PC-3 (cell line): ENCODE measurements at regions of chr5 and their contacts with region 1.

Region 1: DNA sequence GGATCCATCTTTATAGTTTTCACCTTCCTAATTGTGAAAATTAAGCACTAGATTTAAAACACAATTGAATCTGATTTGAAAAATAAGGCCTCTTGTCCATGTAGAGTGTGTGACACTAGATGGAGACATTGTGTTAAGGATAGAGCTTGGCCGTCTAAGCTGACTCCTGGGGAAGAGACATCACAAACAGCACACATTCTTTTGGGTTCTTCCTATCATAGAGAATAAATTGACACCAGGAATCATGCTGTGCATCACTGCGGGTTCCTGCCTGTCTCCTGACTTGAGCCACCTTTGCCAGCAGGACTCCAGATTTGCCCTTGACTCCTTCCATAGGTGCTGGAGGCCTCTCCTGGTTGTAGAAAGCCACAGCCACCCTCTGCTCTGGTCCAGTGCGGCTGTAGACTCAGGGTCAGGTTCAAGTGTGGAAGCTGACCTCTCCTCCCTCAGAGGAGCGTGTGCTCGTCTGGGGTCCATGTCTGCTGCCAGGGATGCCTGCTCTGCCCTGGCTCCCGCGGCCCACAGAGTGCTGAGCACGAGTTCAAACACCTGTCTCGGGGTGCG is 11.2 kb downstream of the ROPN1L start:
- DNase-seq: peak; percentile 98
- ATAC-seq: peak; percentile 47
- H3K4me3 ChIP-seq: peak overlapping the region; percentile 3; the same call in 1 of the 2 replicates
- H3K27ac ChIP-seq: peak overlapping the region; percentile 35
- H3K4me1 ChIP-seq: peaks cover 49% of the 10 kb centered on the region
- H3K27me3 ChIP-seq: no peaks in the 10 kb centered on the region
- CTCF ChIP-seq: peak; percentile 99

Region 2: GRCh38 chr5:10377081-10377480 is 75.8 kb before region 1 on chr5:
- CTCF ChIA-PET with region 1: no interaction called
- POLR2A ChIA-PET with region 1: no interaction called
- intact Hi-C with region 1: no loop called
- DNase-seq: no peak
- ATAC-seq: no peak
- H3K4me3 ChIP-seq: no peak overlapping the region
- H3K27ac ChIP-seq: no peak overlapping the region
- H3K4me1 ChIP-seq: no peaks in the 10 kb centered on the region
- H3K27me3 ChIP-seq: no peaks in the 10 kb centered on the region
- CTCF ChIP-seq: no peak

Region 3: GRCh38 chr5:10467240-10468198 is 14.7 kb after region 1 on chr5:
- CTCF ChIA-PET with region 1: interaction called, 4 read pairs
- POLR2A ChIA-PET with region 1: interaction called, 10 read pairs
- intact Hi-C with region 1: no loop called
- DNase-seq: peak; percentile 85
- ATAC-seq: peak; percentile 78
- H3K4me3 ChIP-seq: peak overlapping the region; percentile 34; the same call in 1 of the 2 replicates
- H3K27ac ChIP-seq: peak overlapping the region; percentile 68
- H3K4me1 ChIP-seq: peaks cover 25% of the 10 kb centered on the region
- H3K27me3 ChIP-seq: no peaks in the 10 kb centered on the region
- CTCF ChIP-seq: no peak

Region 4: GRCh38 chr5:10478436-10478835 is 25.6 kb after region 1 on chr5:
- CTCF ChIA-PET with region 1: no interaction called
- POLR2A ChIA-PET with region 1: no interaction called
- intact Hi-C with region 1: no loop called
- DNase-seq: peak; percentile 33
- ATAC-seq: no peak
- H3K4me3 ChIP-seq: no peak overlapping the region
- H3K27ac ChIP-seq: no peak overlapping the region
- H3K4me1 ChIP-seq: peaks cover 26% of the 10 kb centered on the region
- H3K27me3 ChIP-seq: no peaks in the 10 kb centered on the region
- CTCF ChIP-seq: no peak

Region 5: DNA sequence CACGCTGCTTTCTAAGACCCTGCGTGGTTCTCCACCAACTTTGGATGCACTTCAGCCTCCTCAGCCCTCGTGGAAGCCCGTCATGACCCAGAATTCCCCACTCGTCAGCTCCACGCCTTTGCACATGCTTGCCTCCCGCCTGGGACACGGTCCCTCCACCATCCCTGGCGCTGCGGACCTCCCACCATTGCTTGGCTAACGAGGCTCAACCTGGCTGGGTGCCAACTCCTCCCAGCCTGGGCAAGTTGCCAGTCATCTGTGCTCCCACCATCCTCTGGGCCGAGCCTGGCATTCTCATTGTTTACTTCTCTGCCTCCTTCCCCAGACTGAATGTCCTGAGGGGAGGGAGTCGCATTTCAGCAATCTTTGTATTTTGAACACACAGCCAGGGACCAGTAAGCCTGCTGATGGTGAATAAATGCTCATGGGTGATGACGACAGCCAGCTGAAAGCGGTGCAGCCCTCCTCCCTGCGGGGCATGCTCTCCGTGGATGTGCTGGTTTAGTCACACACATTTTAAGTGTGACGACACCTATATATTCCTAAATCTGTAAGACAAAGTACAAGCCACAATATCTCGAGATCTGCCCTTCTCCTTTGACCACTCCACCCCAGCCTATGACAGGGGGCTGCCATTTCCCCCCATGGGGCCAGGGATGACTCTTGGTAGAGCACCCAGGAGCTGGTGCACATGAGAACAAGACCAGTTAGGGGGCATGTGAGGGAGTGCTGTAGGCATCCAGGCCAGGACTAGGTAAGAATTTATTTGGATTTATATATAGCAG is 148.6 kb after region 1 on chr5:
- CTCF ChIA-PET with region 1: no interaction called
- POLR2A ChIA-PET with region 1: no interaction called
- intact Hi-C with region 1: loop called (anchors 1 kb)
- DNase-seq: peak; percentile 99
- ATAC-seq: peak; percentile 93
- H3K4me3 ChIP-seq: peak overlapping the region; percentile 55
- H3K27ac ChIP-seq: peak overlapping the region; percentile 80
- H3K4me1 ChIP-seq: peaks cover 38% of the 10 kb centered on the region
- H3K27me3 ChIP-seq: no peaks in the 10 kb centered on the region
- CTCF ChIP-seq: no peak

Region 6: GRCh38 chr5:10671041-10672008 is 218.5 kb after region 1 on chr5:
- CTCF ChIA-PET with region 1: no interaction called
- POLR2A ChIA-PET with region 1: no interaction called
- intact Hi-C with region 1: loop called (anchors 5 kb)
- DNase-seq: no peak
- ATAC-seq: no peak
- H3K4me3 ChIP-seq: no peak overlapping the region
- H3K27ac ChIP-seq: no peak overlapping the region
- H3K4me1 ChIP-seq: no peaks in the 10 kb centered on the region
- H3K27me3 ChIP-seq: no peaks in the 10 kb centered on the region
- CTCF ChIP-seq: no peak

Region 7: DNA sequence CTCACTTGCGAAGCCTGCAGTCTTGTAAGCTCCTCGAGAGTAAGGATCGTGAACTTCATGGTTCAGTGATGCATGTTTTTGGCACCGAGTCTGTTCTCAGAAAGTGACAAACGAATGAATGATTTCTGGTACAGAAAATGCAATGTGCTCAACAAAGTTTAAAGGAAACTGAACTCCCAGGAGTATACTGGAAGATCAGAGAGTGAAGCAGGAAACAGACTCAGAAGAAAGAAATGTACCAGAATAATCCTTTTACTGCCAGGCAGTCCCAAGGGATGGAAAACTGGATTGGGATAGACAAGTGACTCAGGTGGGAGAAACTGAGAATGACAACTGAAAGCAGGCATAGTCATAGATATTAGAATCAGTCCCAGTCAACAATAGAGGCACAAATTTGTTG is 1030.8 kb after region 1 on chr5:
- CTCF ChIA-PET with region 1: no interaction called
- POLR2A ChIA-PET with region 1: no interaction called
- intact Hi-C with region 1: loop called (anchors 10 kb)
- DNase-seq: peak; percentile 26
- ATAC-seq: no peak
- H3K4me3 ChIP-seq: no peak overlapping the region
- H3K27ac ChIP-seq: no peak overlapping the region
- H3K4me1 ChIP-seq: no peaks in the 10 kb centered on the region
- H3K27me3 ChIP-seq: peaks cover 13% of the 10 kb centered on the region; the same call in 1 of the 2 replicates
- CTCF ChIP-seq: no peak